Mammary epithelial cell (primary cell): ENCODE measurements at regions of chr4 and their contacts with region 1.

Region 1: GRCh38 chr4:74516321-74516720 is 71.4 kb downstream of the AREG start:
- DNase-seq: peak; percentile 53
- H3K4me3 ChIP-seq: no peak overlapping the region
- H3K27ac ChIP-seq: no peak overlapping the region
- H3K4me1 ChIP-seq: no peaks in the 10 kb centered on the region
- H3K27me3 ChIP-seq: no peaks in the 10 kb centered on the region
- CTCF ChIP-seq: no peak

Region 2: GRCh38 chr4:74483290-74483911 is 32.9 kb before region 1 on chr4:
- CTCF ChIA-PET with region 1: no interaction called
- dilution Hi-C with region 1: loop called (anchors 5 kb)
- in situ Hi-C with region 1: no loop called
- intact Hi-C with region 1: no loop called
- DNase-seq: no peak
- H3K4me3 ChIP-seq: no peak overlapping the region
- H3K27ac ChIP-seq: no peak overlapping the region
- H3K4me1 ChIP-seq: peaks cover 11% of the 10 kb centered on the region
- H3K27me3 ChIP-seq: no peaks in the 10 kb centered on the region
- CTCF ChIP-seq: no peak

Region 3: GRCh38 chr4:74583077-74583693 is 66.9 kb after region 1 on chr4:
- CTCF ChIA-PET with region 1: no interaction called
- dilution Hi-C with region 1: no loop called
- in situ Hi-C with region 1: no loop called
- intact Hi-C with region 1: no loop called
- DNase-seq: peak; percentile 21
- H3K4me3 ChIP-seq: no peak overlapping the region
- H3K27ac ChIP-seq: no peak overlapping the region
- H3K4me1 ChIP-seq: peaks cover 13% of the 10 kb centered on the region
- H3K27me3 ChIP-seq: no peaks in the 10 kb centered on the region
- CTCF ChIP-seq: no peak